ENCODE measurements at regions of chr10 and their contacts with region 1.

Region 1: GRCh38 chr10:90787393-90788198 is 70.2 kb downstream of the HTR7 start:
- DNase-seq: no peak
- H3K4me3 ChIP-seq: no peak overlapping the region
- H3K27ac ChIP-seq: no peak overlapping the region
- H3K27me3 ChIP-seq: peaks cover 6% of the 10 kb centered on the region
- CTCF ChIP-seq: peak; percentile 92

Region 2: GRCh38 chr10:90148116-90148855 is 639.3 kb before region 1 on chr10:
- CTCF ChIA-PET with region 1: interaction called, 10 read pairs
- POLR2A ChIA-PET with region 1: no interaction called
- DNase-seq: no peak
- H3K4me3 ChIP-seq: no peak overlapping the region
- H3K27ac ChIP-seq: no peak overlapping the region
- H3K27me3 ChIP-seq: peaks cover 2% of the 10 kb centered on the region
- CTCF ChIP-seq: peak; percentile 60

Region 3: GRCh38 chr10:90227217-90227656 is 560.4 kb before region 1 on chr10:
- CTCF ChIA-PET with region 1: no interaction called
- POLR2A ChIA-PET with region 1: no interaction called
- DNase-seq: peak; percentile 11
- H3K4me3 ChIP-seq: no peak overlapping the region
- H3K27ac ChIP-seq: no peak overlapping the region
- H3K27me3 ChIP-seq: no peaks in the 10 kb centered on the region
- CTCF ChIP-seq: no peak

Region 4: GRCh38 chr10:90484518-90484917 is 303.1 kb before region 1 on chr10:
- CTCF ChIA-PET with region 1: no interaction called
- POLR2A ChIA-PET with region 1: no interaction called
- DNase-seq: no peak
- H3K4me3 ChIP-seq: no peak overlapping the region
- H3K27ac ChIP-seq: no peak overlapping the region
- H3K27me3 ChIP-seq: peaks cover 2% of the 10 kb centered on the region
- CTCF ChIP-seq: no peak

Region 5: DNA sequence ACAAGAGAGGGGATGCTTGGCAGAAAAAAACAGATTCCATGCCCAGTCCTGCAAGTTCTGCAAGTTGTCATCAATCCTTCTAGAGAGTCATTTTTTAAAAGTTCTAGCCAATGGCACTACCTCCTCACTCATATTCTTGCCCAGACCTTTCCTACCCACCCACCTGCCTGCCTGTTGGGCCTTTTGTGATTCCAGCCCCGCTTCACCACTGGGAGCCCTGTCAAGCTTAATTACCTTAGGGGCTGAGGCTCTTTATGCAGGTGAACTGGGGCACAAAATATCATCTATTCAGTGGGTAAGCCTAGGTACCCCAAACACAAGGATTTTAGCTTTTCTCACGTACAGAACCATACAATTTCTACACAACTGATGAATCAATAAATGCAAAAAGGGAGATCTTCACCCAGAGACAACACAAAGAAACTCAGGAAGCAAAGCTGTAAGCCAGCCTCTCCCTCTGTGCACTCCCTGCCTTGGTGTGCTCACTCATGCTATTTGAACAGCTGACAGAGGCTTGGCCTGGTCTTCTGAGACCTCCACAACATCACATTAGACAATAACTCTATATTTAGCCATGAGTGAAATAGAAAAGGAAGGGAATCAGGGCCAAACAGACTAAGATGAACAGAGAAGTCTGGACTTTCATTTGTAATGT is 152.4 kb before region 1 on chr10:
- CTCF ChIA-PET with region 1: no interaction called
- POLR2A ChIA-PET with region 1: no interaction called
- DNase-seq: no peak
- H3K4me3 ChIP-seq: no peak overlapping the region
- H3K27ac ChIP-seq: no peak overlapping the region
- H3K27me3 ChIP-seq: no peaks in the 10 kb centered on the region
- CTCF ChIP-seq: no peak

Region 6: GRCh38 chr10:90745563-90745962 is 42.0 kb before region 1 on chr10:
- CTCF ChIA-PET with region 1: interaction called, 21 read pairs
- POLR2A ChIA-PET with region 1: no interaction called
- DNase-seq: no peak
- H3K4me3 ChIP-seq: no peak overlapping the region
- H3K27ac ChIP-seq: no peak overlapping the region
- H3K27me3 ChIP-seq: no peaks in the 10 kb centered on the region
- CTCF ChIP-seq: no peak

Region 7: GRCh38 chr10:90769946-90770841 is 17.4 kb before region 1 on chr10:
- CTCF ChIA-PET with region 1: interaction called, 15 read pairs
- POLR2A ChIA-PET with region 1: no interaction called
- DNase-seq: no peak
- H3K4me3 ChIP-seq: no peak overlapping the region
- H3K27ac ChIP-seq: no peak overlapping the region
- H3K27me3 ChIP-seq: no peaks in the 10 kb centered on the region
- CTCF ChIP-seq: no peak

Region 8: GRCh38 chr10:90857635-90858460 is 70.3 kb after region 1 on chr10 and contains the start of gene HTR7:
- CTCF ChIA-PET with region 1: interaction called, 10 read pairs
- POLR2A ChIA-PET with region 1: no interaction called
- DNase-seq: no peak
- H3K4me3 ChIP-seq: peak within 1 kb of the TSS; percentile 63
- H3K27ac ChIP-seq: peak within 1 kb of the TSS; percentile 65
- H3K27me3 ChIP-seq: peaks cover 5% of the 10 kb centered on the region
- CTCF ChIP-seq: peak; percentile 49
- polyA plus RNA-seq, gene HTR7: 1.1 TPM in 2 replicates

Region 9: DNA sequence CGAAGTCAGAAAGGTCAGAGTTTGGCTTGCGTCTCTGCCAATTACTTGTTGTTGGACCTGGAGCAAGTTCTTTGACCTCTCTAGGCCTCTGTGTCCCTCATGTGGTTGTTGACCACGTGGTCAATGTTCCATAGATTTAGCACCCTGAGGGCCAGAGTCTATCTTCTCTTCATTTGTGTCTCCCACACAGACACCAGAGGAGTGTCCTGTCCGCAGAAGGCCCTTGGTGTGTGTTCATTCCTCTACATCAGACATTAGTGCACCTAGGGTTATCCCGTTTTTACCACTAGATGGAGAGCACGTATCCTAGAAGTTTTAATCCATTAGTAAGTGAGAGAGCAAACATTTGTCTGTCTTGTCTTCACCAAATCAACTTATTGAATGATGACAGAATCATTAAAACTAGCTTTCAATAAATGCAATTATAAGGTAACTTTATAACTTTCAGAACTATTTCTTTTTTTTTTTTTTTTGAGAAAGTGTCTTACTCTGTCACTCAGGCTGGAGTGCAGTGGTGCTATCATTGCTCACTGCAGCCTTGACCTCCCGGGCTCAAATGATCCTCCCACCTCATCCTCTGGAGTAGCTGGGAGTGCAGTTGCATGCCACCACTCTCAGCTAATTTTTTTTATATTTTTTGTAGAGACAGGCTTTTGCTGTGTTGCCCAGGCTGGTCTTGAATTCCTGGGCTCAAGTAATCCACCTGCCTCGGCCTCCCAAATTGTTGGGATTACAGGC is 255.7 kb after region 1 on chr10:
- CTCF ChIA-PET with region 1: no interaction called
- POLR2A ChIA-PET with region 1: no interaction called
- DNase-seq: no peak
- H3K4me3 ChIP-seq: no peak overlapping the region
- H3K27ac ChIP-seq: no peak overlapping the region
- H3K27me3 ChIP-seq: peaks cover 7% of the 10 kb centered on the region
- CTCF ChIP-seq: peak; percentile 47